ENCODE measurements at regions of chr22 and their contacts with region 1.

Region 1: DNA sequence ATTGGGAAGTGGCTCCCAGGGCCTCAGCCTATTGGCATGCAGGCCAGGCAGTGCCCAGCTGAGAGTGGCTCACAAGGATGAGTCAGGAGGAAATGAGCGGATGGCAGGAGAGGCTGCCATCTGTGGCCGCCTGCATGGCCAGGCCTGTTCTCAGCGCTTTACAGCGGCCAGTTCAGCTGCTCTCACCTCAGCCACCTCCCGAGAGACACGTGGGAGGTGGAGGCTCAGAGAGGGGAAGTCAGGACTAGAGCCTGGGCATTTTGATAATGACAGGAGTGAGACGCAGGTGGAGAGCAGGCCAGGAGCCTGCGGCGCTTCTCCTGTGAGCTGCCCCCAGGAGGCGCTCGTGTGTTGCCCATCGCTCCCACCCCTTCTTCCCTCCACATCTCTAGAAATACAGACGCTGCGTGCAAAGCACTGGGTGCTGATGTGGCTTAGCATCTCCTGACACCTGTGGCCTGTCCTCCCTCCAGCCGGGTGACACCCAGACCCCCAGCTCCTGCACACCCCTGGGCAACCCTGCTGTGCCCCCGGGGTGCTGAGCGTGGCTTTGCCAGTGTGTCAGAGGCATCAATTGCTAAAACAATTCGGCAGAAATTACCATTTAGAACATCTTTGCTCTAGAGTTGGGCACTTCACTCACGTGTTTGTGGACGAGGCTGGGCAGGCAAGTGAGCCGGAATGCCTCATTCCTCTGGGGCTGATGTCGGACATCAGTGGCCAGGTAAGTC is 21.4 kb upstream of the PANX2 start:
- DNase-seq: peak; percentile 70 to 80 (median 75)
- ATAC-seq: peak; percentile 70 to 74 (median 71)
- H3K4me3 ChIP-seq: no peak overlapping the region
- H3K27ac ChIP-seq: no peak overlapping the region
- H3K4me1 ChIP-seq: peaks cover 0 to 30% (median 10%) of the 10 kb centered on the region in 4 donors
- H3K27me3 ChIP-seq: no peaks in the 10 kb centered on the region
- CTCF ChIP-seq: peak; percentile 81 to 92 (median 86)
- POLR2A ChIP-seq: no peak

Region 2: DNA sequence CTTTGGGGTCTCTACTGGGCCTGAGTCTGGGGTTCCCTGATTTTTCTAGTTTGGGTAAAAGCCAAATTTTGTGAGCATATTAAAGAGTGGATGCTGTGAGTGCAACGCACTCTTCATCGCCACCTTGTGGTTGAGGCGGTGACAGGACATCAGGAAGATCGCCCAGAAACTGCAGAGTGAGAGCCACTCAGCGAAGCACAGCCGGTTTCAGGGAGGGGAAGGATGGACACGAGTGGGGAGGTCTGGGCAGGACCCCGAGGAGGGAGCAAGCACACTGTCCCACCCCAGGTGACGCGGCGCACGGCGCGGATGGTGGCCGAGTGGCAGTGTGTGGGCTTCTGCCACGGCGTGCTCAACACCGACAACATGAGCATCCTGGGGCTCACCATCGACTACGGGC is 60.7 kb after region 1 on chr22:
- intact Hi-C with region 1: loop called (anchors 5 kb)
- DNase-seq: peak; percentile 46 to 63 (median 58)
- ATAC-seq: peak in 1 of 4 donors; percentile 12
- H3K4me3 ChIP-seq: no peak overlapping the region
- H3K27ac ChIP-seq: peak overlapping the region in 1 of 3 donors; percentile 13
- H3K4me1 ChIP-seq: peaks cover 0 to 35% (median 12%) of the 10 kb centered on the region in 4 donors
- H3K27me3 ChIP-seq: no peaks in the 10 kb centered on the region
- CTCF ChIP-seq: peak; percentile 72 to 83 (median 82)
- POLR2A ChIP-seq: no peak

Region 3: DNA sequence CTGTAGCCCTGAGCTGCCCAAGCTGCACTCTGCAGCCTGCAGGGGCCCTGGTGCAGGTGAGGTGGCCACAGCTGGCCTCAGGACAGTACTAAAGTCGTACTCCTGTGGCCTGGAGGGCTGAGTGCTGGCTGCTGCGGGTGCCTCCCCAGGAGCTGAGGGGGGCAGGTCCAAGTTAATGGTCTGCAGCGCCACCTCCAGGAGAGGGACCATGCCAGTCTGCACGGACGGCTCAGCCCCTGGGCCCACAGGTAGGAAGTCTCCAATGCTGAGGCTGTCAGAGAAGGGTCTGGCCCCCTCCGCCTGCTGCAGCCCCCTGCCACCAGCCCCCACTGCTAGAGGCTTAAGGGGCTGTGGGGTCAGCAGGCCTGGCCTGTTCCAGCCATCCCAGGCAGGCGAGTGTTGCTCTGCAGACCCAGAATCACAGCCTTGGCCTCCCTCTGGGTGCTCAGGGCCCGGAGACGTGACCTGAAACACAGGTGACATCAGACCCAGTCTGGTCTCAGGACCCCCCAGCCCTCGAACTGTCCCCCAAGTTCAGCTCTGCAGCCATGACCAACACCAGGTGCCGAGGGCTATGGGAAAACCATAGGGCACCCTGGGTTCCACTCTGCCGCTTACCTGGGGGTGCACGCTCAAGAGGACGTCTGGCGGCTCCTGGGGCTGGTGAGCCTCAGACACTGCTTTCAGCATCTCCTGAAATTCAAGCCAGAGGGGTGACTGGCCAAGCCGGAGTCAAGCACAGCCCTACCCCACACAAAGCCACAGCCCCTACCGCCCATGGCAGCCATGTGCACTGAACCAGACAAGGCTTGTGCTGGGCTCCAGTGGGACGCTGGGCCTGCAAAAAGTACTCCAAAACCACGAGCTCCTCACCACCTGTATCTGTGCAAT is 72.5 kb after region 1 on chr22:
- intact Hi-C with region 1: no loop called
- DNase-seq: peak in 1 of 3 donors; percentile 18
- ATAC-seq: no peak
- H3K4me3 ChIP-seq: no peak overlapping the region
- H3K27ac ChIP-seq: no peak overlapping the region
- H3K4me1 ChIP-seq: peaks cover 0 to 4% (median 2%) of the 10 kb centered on the region in 4 donors
- H3K27me3 ChIP-seq: no peaks in the 10 kb centered on the region
- CTCF ChIP-seq: peak in 1 of 4 donors; percentile 20
- POLR2A ChIP-seq: no peak

Measured in right lobe of liver (tissue), 6 donors.